Lower lobe of right lung (tissue), 2 donors: ENCODE measurements at regions of chr2 and their contacts with region 1.

Region 1: DNA sequence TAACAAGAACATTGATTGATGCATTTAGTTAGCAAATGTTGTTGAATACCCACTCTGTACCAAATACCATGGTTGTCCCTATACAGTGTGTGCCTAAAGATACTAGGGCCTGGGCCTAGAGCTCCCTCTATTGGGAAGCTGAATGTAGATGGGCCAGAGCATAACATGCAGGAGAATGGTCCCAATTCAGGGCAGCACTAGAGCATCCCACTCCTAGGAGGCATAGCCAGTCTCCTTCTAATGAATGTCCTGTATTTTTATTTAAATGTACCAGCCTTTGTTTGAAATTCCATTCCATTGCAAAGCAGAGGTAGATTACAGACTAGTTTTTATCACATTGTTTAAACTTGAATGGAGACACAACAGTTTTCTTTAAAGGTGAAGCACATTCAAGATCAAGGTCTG is 90.6 kb downstream of the FEZ2 start:
- DNase-seq: no peak
- ATAC-seq: peak; percentile 86 to 89
- H3K4me3 ChIP-seq: no peak overlapping the region
- H3K27ac ChIP-seq: no peak overlapping the region
- H3K4me1 ChIP-seq: no peaks in the 10 kb centered on the region
- H3K27me3 ChIP-seq: no peaks in the 10 kb centered on the region
- CTCF ChIP-seq: peak; percentile 77

Region 2: DNA sequence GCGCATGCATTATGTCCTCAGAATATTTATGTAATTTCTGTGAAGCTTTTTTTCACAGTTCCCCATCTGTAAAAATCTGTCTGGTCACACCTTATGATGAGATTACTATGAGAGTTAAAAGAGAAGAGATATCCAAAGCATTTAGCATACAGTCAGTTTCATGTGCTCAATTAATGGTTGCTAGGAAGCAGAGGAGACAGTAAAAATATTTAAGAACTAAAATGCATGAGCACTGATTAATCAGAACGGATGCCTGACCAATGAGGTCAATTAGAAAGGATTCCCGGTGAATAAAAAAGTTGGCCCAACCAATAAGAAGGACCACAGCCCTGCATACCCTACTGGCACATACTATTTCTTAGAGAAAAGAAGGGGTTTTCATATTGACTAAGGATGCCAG is 163.8 kb before region 1 on chr2:
- intact Hi-C with region 1: no loop called
- DNase-seq: no peak
- ATAC-seq: no peak
- H3K4me3 ChIP-seq: no peak overlapping the region
- H3K27ac ChIP-seq: no peak overlapping the region
- H3K4me1 ChIP-seq: no peaks in the 10 kb centered on the region
- H3K27me3 ChIP-seq: no peaks in the 10 kb centered on the region
- CTCF ChIP-seq: no peak

Region 3: GRCh38 chr2:36355151-36355889 is 152.1 kb before region 1 on chr2 and contains the start of gene CRIM1:
- intact Hi-C with region 1: loop called (anchors 10 kb)
- DNase-seq: peak; percentile 91
- ATAC-seq: peak; percentile 82 to 90
- H3K4me3 ChIP-seq: peak within 1 kb of the TSS; percentile 86
- H3K27ac ChIP-seq: peak within 1 kb of the TSS; percentile 76
- H3K4me1 ChIP-seq: peaks cover 47% of the 10 kb centered on the region
- H3K27me3 ChIP-seq: no peaks in the 10 kb centered on the region
- CTCF ChIP-seq: no peak
- total RNA-seq, gene CRIM1: 105 TPM

Region 4: GRCh38 chr2:36941867-36942266 is 434.5 kb after region 1 on chr2:
- intact Hi-C with region 1: no loop called
- DNase-seq: no peak
- ATAC-seq: no peak
- H3K4me3 ChIP-seq: no peak overlapping the region
- H3K27ac ChIP-seq: no peak overlapping the region
- H3K4me1 ChIP-seq: no peaks in the 10 kb centered on the region
- H3K27me3 ChIP-seq: no peaks in the 10 kb centered on the region
- CTCF ChIP-seq: no peak

Region 5: GRCh38 chr2:37125416-37125815 is 618.0 kb after region 1 on chr2:
- intact Hi-C with region 1: no loop called
- DNase-seq: no peak
- ATAC-seq: no peak
- H3K4me3 ChIP-seq: no peak overlapping the region
- H3K27ac ChIP-seq: no peak overlapping the region
- H3K4me1 ChIP-seq: no peaks in the 10 kb centered on the region
- H3K27me3 ChIP-seq: no peaks in the 10 kb centered on the region
- CTCF ChIP-seq: no peak